ENCODE measurements at regions of chrX and their contacts with region 1.

Region 1: DNA sequence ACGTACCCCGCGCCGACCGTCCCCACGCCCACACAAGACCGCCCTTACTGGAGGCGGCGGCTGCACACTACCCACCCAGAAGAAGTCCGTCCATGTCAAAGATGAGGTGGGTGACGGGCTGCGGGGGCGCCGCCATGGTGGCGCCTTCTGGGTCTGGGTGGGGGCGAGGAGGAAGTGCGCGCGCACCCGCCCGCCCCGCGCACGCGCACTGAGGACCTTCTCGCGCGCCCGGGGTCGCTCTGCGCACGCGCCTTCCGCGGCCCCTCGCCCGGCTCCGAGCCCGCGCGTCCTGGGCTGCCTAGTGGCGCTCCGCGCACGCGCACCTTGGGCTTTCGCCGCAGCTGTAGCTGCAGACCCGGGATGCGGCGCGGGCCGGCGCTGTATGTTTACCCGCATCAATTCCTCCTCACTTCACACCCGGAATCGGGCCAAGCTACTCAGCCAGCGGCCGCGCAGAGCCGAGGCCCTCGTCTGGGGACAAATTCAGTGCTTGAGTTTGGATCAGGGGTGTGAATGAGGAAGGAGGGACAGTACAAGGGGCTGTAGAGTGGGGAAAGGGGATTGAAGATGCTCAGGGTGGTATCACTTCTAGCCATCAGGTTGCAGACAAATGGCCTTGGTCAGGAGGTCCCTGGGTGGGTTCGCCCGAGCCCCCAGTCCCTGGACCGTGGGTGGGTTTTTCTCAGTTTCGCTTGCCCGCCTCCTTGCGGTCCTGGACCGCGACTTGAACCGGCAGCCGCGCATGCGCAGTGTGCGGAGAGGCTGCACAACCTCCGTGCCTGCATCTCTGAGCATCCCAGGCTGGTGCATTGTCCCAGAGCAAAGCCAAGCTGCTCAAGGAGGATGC is at the start of gene PUDP:
- DNase-seq: peak; percentile 84
- H3K4me3 Mint-ChIP-seq: peak within 1 kb of the TSS; percentile 85
- H3K27ac Mint-ChIP-seq: no peak within 1 kb of the TSS
- H3K4me1 Mint-ChIP-seq: peaks cover 13% of the 10 kb centered on the region
- H3K27me3 Mint-ChIP-seq: peaks cover 6% of the 10 kb centered on the region
- CTCF ChIP-seq: no peak
- total RNA-seq, gene PUDP: 14.2 and 16.1 TPM in 2 replicates

Region 2: DNA sequence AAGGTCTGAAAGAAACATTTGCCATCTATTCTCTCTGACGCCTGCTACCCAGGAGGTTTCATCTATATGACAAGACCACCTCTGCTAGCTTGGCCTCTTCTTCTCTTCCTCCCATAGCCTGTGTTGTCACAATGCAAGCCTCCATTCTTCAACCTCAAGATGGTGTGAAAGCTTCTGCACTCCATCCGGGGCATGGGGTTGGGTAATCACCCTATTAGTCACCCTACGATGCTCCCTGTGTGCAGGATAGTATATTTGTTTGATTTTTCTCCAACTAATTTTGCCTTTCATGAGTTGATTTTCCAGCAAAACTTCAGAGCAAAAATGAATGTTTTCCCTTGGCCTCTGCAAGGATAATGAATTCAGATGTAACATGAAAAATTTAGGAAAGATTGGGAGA is 128.7 kb before region 1 on chrX:
- CTCF ChIA-PET with region 1: no interaction called
- POLR2A ChIA-PET with region 1: no interaction called
- intact Hi-C with region 1: no loop called
- DNase-seq: peak; percentile 8
- H3K4me3 Mint-ChIP-seq: no peak overlapping the region
- H3K27ac Mint-ChIP-seq: no peak overlapping the region
- H3K4me1 Mint-ChIP-seq: no peaks in the 10 kb centered on the region
- H3K27me3 Mint-ChIP-seq: no peaks in the 10 kb centered on the region
- CTCF ChIP-seq: no peak

Region 3: DNA sequence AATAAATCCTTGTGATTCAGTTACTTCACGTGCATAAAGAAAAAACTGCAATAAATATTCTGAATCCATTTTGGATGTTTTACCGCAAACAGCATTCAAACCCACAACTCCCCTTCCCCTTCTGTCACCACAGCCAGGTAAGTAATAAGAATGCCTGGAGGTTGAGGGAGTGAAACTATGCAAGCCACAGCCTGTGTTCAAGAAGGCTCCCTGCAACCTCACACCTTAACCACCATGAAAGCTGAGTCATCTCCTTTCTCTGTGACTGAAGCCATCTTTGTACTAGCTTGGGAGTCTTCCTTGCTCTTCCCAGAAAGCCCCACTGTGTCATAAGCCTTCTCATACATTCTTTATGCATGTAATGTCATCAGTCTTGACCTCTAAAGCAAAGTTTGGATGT is 296.8 kb after region 1 on chrX:
- CTCF ChIA-PET with region 1: no interaction called
- POLR2A ChIA-PET with region 1: interaction called, 4 read pairs
- intact Hi-C with region 1: loop called (anchors 5 kb)
- DNase-seq: peak; percentile 75
- H3K4me3 Mint-ChIP-seq: no peak overlapping the region
- H3K27ac Mint-ChIP-seq: no peak overlapping the region
- H3K4me1 Mint-ChIP-seq: peaks cover 24% of the 10 kb centered on the region
- H3K27me3 Mint-ChIP-seq: no peaks in the 10 kb centered on the region
- CTCF ChIP-seq: no peak

Region 4: DNA sequence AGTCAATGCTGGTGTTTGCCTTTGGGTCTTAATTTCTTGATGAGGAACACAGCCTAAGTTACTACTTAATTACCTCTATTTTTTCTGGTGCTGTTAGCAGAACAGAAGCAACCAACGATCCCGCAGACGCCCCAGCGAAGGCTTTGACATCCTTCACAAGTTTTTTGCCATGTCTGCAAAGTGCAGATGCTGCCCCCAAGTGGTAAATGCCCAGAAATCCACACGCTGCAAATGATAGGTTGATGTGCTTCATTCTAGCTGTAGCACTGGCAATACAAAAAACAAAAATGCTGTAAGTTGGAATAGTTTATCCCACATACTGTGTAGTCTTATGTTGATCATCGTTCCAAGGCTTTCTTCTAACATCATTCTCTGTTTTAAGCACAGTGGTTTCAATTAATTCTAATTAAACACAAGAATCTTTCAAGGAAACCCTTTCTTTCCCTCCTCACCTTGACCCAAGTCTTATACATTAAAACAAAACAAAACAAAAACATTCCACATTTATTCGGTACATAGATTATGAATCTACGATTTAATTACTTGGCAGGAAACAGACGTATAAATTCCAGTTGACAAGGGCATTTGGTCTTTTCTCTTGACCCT is 777.8 kb after region 1 on chrX:
- CTCF ChIA-PET with region 1: no interaction called
- POLR2A ChIA-PET with region 1: interaction called, 4 read pairs
- intact Hi-C with region 1: loop called (anchors 5 kb)
- DNase-seq: peak; percentile 72
- H3K4me3 Mint-ChIP-seq: peak overlapping the region; percentile 81
- H3K27ac Mint-ChIP-seq: no peak overlapping the region
- H3K4me1 Mint-ChIP-seq: peaks cover 3% of the 10 kb centered on the region
- H3K27me3 Mint-ChIP-seq: no peaks in the 10 kb centered on the region
- CTCF ChIP-seq: peak; percentile 56

Measured in MCF 10A (cell line).